ENCODE measurements at regions of chr19 and their contacts with region 1.

Region 1: GRCh38 chr19:10644260-10645007 is 9.7 kb upstream of the ILF3 start:
- DNase-seq: peak; percentile 80
- H3K4me3 ChIP-seq: no peak overlapping the region
- H3K27ac ChIP-seq: no peak overlapping the region
- H3K4me1 ChIP-seq: peaks cover 4% of the 10 kb centered on the region
- H3K27me3 ChIP-seq: no peaks in the 10 kb centered on the region
- CTCF ChIP-seq: peak; percentile 83 to 92
- POLR2A ChIP-seq: no peak

Region 2: GRCh38 chr19:10259162-10259905 is 385.1 kb before region 1 on chr19:
- CTCF ChIA-PET with region 1: no interaction called
- POLR2A ChIA-PET with region 1: no interaction called
- dilution Hi-C with region 1: no loop called
- intact Hi-C with region 1: no loop called
- DNase-seq: peak; percentile 79
- H3K4me3 ChIP-seq: no peak overlapping the region
- H3K27ac ChIP-seq: no peak overlapping the region
- H3K4me1 ChIP-seq: no peaks in the 10 kb centered on the region
- H3K27me3 ChIP-seq: no peaks in the 10 kb centered on the region
- CTCF ChIP-seq: peak; percentile 63 to 80
- POLR2A ChIP-seq: no peak

Region 3: GRCh38 chr19:10339380-10339960 is 305.0 kb before region 1 on chr19 and contains the start of gene ICAM3:
- CTCF ChIA-PET with region 1: no interaction called
- POLR2A ChIA-PET with region 1: no interaction called
- dilution Hi-C with region 1: no loop called
- intact Hi-C with region 1: no loop called
- DNase-seq: no peak
- H3K4me3 ChIP-seq: no peak within 1 kb of the TSS
- H3K27ac ChIP-seq: no peak within 1 kb of the TSS
- H3K4me1 ChIP-seq: peaks cover 2% of the 10 kb centered on the region
- H3K27me3 ChIP-seq: no peaks in the 10 kb centered on the region
- CTCF ChIP-seq: no peak
- POLR2A ChIP-seq: no peak
- total RNA-seq, gene ICAM3: 11.4 and 11.6 TPM in 2 replicates

Region 4: DNA sequence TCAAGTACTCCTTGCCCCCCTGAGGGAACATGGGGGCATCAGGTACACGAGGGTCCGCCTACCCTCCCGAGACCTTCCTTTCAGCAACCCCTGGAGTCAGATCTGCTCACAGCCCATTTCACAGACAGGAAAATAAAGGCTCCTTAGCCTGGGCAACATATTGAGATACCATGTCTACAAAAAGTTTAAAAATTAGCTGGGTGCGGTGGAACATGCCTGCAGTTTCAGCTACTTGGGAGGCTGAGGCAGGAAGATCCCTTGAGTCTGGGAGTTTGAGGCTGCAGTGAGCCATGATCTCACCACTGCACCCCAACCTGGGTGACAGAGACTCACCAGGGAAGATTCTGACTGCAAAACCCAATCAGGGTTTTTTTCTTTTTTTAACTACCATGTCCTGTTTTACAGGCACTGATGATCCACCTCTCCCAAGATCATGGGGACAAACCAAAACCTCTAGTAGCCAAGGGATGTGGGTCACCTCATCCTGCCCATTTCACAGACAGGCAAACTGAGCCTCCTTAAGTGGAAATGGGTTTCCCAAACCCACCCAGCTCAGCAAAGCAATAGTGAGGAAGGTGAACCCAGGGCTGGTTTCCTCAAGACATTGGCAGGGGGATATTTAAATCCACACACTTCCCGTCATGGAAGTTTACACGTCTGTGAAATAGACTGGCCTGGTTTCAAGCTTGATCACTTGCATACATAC is 69.3 kb before region 1 on chr19:
- CTCF ChIA-PET with region 1: interaction called, 654 read pairs
- POLR2A ChIA-PET with region 1: interaction called, 3 read pairs
- dilution Hi-C with region 1: no loop called
- intact Hi-C with region 1: no loop called
- DNase-seq: no peak
- H3K4me3 ChIP-seq: no peak overlapping the region
- H3K27ac ChIP-seq: no peak overlapping the region
- H3K4me1 ChIP-seq: no peaks in the 10 kb centered on the region
- H3K27me3 ChIP-seq: no peaks in the 10 kb centered on the region
- CTCF ChIP-seq: no peak
- POLR2A ChIP-seq: no peak

Region 5: DNA sequence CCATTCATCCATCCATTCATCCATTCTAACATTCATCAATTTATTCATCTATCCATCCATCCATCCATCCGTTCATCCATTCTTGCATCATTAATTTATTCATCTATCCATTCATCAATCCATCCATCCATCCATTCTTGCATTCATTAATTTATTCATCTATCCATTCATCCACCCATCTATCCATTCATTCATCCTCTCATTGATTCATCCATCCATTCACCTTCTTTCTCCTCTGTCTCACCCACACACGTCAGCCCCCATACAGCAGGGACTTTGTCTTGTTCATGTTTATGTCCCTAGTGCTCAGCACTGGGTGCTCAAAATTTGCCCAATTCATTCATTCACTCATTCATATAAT is 56.7 kb before region 1 on chr19:
- CTCF ChIA-PET with region 1: interaction called, 654 read pairs
- POLR2A ChIA-PET with region 1: interaction called, 8 read pairs
- dilution Hi-C with region 1: no loop called
- intact Hi-C with region 1: no loop called
- DNase-seq: no peak
- H3K4me3 ChIP-seq: no peak overlapping the region
- H3K27ac ChIP-seq: no peak overlapping the region
- H3K4me1 ChIP-seq: no peaks in the 10 kb centered on the region
- H3K27me3 ChIP-seq: peaks cover 10% of the 10 kb centered on the region in 2 experiments
- CTCF ChIP-seq: no peak
- POLR2A ChIP-seq: no peak

Region 6: GRCh38 chr19:10602330-10603083 is 41.9 kb before region 1 on chr19:
- CTCF ChIA-PET with region 1: interaction called, 21 read pairs
- POLR2A ChIA-PET with region 1: no interaction called
- dilution Hi-C with region 1: no loop called
- intact Hi-C with region 1: loop called (anchors 2 kb)
- DNase-seq: peak; percentile 83
- H3K4me3 ChIP-seq: peak overlapping the region; percentile 87 to 93 (median 91)
- H3K27ac ChIP-seq: peak overlapping the region; percentile 74
- H3K4me1 ChIP-seq: peaks cover 25% of the 10 kb centered on the region
- H3K27me3 ChIP-seq: no peaks in the 10 kb centered on the region
- CTCF ChIP-seq: no peak
- POLR2A ChIP-seq: no peak

Region 7: GRCh38 chr19:10625003-10625776 is 19.2 kb before region 1 on chr19 and contains the start of gene SLC44A2:
- CTCF ChIA-PET with region 1: interaction called, 25 read pairs
- POLR2A ChIA-PET with region 1: no interaction called
- dilution Hi-C with region 1: no loop called
- intact Hi-C with region 1: no loop called
- DNase-seq: peak; percentile 41
- H3K4me3 ChIP-seq: peak within 1 kb of the TSS; percentile 33 to 37 (median 33)
- H3K27ac ChIP-seq: no peak within 1 kb of the TSS
- H3K4me1 ChIP-seq: peaks cover 10% of the 10 kb centered on the region
- H3K27me3 ChIP-seq: no peaks in the 10 kb centered on the region
- CTCF ChIP-seq: no peak
- POLR2A ChIP-seq: peak; percentile 22
- total RNA-seq, gene SLC44A2: 130 and 136 TPM in 2 replicates

Region 8: GRCh38 chr19:10780368-10780767 is 135.9 kb after region 1 on chr19:
- CTCF ChIA-PET with region 1: no interaction called
- POLR2A ChIA-PET with region 1: no interaction called
- dilution Hi-C with region 1: no loop called
- intact Hi-C with region 1: no loop called
- DNase-seq: peak; percentile 90
- H3K4me3 ChIP-seq: no peak overlapping the region
- H3K27ac ChIP-seq: peak overlapping the region; percentile 96
- H3K4me1 ChIP-seq: peaks cover 19% of the 10 kb centered on the region
- H3K27me3 ChIP-seq: no peaks in the 10 kb centered on the region
- CTCF ChIP-seq: no peak
- POLR2A ChIP-seq: no peak